Ovary (tissue), 10 donors: ENCODE measurements at regions of chr18 and their contacts with region 1.

Region 1: GRCh38 chr18:63518178-63519012 is 23.8 kb upstream of the SERPINB12 start:
- DNase-seq: peak; percentile 25 to 63 (median 36)
- H3K4me3 ChIP-seq: no peak overlapping the region
- H3K27ac ChIP-seq: no peak overlapping the region
- H3K4me1 ChIP-seq: peaks cover 2% of the 10 kb centered on the region
- H3K27me3 ChIP-seq: no peaks in the 10 kb centered on the region
- CTCF ChIP-seq: peak; percentile 50 to 74 (median 63)
- EP300 ChIP-seq: no peak
- POLR2A ChIP-seq: no peak

Region 2: DNA sequence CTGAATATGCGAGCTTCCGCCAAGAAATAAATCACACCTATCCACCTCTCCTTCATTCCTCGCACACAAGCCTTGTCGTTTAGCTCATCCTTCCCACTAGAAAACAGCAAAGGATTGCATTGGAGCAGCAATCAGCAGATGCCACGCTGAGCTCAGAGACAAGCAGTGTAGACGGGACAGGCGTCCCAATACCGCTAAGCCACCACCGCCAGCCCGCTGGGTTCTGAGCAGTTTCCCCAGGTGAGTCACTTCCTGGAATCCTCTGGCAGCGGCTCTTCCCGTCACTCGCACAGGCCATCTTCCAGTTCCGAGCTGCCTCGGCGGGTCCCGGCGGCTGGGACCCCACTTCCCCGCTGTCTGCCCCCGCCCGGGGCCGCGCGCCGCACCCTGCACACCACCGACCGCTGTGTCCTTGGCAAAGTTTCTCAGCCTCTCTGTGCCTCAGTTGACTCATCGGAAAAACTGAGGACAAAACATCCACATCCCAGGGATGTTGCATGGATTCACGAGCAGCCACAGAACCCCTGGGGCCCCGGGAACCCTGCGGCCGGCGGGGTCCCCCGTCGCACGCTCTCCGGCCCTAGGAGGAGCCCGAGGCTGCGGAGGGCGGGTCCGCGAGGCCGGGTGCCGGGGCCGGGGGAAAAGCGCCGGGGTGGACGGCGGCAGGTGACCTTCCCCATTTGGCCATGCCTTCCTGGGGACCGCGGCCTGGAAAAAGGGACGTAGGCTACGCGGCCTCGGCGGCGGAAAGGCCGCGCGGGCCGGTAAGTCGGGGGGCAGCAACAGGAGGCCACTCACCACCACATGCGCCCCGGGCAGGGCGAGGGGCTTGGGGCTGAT is 152.0 kb before region 1 on chr18:
- intact Hi-C with region 1: no loop called
- DNase-seq: peak; percentile 36 to 58 (median 55)
- H3K4me3 ChIP-seq: peak overlapping the region; percentile 100
- H3K27ac ChIP-seq: peak overlapping the region; percentile 93 to 97
- H3K4me1 ChIP-seq: peaks cover 2% of the 10 kb centered on the region
- H3K27me3 ChIP-seq: no peaks in the 10 kb centered on the region
- CTCF ChIP-seq: no peak
- EP300 ChIP-seq: no peak
- POLR2A ChIP-seq: no peak

Region 3: GRCh38 chr18:63578357-63578958 is 60.1 kb after region 1 on chr18:
- intact Hi-C with region 1: loop called in 1 of 4 experiments (anchors 10 kb)
- DNase-seq: no peak
- H3K4me3 ChIP-seq: no peak overlapping the region
- H3K27ac ChIP-seq: no peak overlapping the region
- H3K4me1 ChIP-seq: no peaks in the 10 kb centered on the region
- H3K27me3 ChIP-seq: no peaks in the 10 kb centered on the region
- CTCF ChIP-seq: no peak
- EP300 ChIP-seq: no peak
- POLR2A ChIP-seq: no peak

Region 4: DNA sequence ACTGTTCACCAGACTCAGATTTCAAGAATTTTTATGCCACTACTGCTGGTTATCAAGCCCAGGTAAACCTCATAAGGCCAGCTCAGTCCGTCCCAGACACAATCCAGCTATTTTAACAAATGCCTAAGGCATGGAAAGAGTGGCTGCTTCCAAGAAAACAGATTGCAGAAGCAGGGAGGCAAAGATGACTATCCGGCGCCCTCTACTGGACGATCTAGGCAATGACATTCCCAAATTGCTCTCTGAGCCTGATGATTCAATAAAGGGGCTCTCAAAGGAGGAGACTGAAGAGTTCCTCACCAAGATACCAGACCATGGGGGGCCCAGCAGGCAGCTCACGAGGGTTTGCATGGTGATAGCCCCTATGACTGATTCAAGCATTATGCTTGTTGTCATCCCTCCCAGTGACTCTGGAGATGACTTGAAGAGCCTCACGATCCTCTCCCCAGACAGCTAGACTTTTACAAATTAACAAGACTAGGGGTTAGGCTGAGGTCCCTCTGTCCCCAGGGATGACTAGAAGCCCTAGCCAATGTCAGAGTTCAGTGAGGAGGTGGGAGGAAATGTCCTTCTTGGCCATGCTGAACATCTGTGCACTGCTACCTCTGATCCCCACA is 476.5 kb after region 1 on chr18:
- intact Hi-C with region 1: loop called in 2 of 4 experiments (anchors 10 kb)
- DNase-seq: peak in 3 of 5 donors; percentile 49 to 55 (median 49)
- H3K4me3 ChIP-seq: no peak overlapping the region
- H3K27ac ChIP-seq: no peak overlapping the region
- H3K4me1 ChIP-seq: no peaks in the 10 kb centered on the region
- H3K27me3 ChIP-seq: no peaks in the 10 kb centered on the region
- CTCF ChIP-seq: peak; percentile 38 to 72 (median 60)
- EP300 ChIP-seq: no peak
- POLR2A ChIP-seq: no peak